Activated B cell treated with CpG ODN at 0.5 μM for 24 hours (primary cell): ENCODE measurements at regions of chr18 and their contacts with region 1.

Region 1: DNA sequence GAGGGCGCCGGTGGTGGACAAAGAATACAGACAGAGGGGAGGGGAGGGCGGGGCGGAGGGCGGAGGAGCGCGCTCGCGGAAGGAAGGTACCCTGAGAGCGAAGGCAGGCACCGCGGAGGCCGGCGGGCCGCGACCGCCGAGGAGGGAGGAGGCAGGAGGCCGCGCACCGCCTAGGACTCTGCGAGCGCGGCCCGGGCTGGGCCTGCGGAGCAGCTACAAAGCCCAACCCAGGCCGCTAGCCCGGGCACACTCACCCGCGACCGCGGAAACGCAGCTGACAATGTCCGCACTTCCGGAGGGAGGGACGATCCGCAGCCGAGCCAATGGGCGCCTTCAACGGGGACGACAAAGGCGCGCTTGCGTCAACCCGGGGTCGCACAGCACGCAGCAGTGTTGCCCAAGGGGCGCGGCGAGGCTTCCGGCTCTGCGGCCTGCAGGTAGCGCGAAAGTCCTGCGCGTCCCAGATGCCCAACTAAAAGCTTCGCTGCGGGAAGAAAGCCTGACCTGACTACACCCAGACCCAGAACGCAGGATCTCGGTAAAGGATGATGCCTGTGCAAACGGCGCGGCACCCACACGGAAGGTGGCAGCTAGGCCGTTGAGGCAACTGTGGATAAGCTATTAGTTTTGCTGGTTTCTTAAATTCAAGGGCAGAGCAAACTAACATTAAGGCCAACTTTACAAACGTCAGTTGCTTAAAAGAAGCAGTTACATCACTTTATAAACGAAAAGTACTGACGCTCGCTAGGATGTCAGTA is at the start of gene C18orf32:
- DNase-seq: peak; percentile 94
- ATAC-seq: peak; percentile 92
- H3K4me3 Mint-ChIP-seq: peak within 1 kb of the TSS; percentile 94
- H3K27ac Mint-ChIP-seq: peak within 1 kb of the TSS; percentile 98
- H3K4me1 Mint-ChIP-seq: peaks cover 68% of the 10 kb centered on the region
- H3K27me3 Mint-ChIP-seq: no peaks in the 10 kb centered on the region
- CTCF ChIP-seq: no peak
- total RNA-seq, gene C18orf32: 31.6 and 32.9 TPM in 2 replicates

Region 2: DNA sequence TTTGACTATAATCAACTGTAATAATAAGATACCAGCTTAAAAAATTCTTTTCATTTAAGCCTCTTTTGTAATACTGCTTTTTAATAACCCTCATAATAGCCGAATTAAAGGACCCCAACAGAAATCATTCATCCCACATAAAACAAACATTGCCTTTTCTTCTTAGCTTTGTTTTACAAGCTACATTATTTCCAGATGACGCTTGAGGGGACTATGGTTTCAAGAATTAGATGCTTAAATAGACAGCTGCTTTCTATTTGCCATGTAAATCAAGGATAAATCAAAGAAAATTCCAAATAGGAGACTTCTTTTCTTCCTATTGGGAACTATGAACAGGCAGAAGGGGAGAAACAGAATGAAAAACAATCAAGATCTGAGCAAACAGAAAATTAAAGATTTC is 335.6 kb before region 1 on chr18:
- CTCF ChIA-PET with region 1: no interaction called
- POLR2A ChIA-PET with region 1: no interaction called
- intact Hi-C with region 1: no loop called
- DNase-seq: no peak
- ATAC-seq: no peak
- H3K4me3 Mint-ChIP-seq: no peak overlapping the region
- H3K27ac Mint-ChIP-seq: no peak overlapping the region
- H3K4me1 Mint-ChIP-seq: no peaks in the 10 kb centered on the region
- H3K27me3 Mint-ChIP-seq: no peaks in the 10 kb centered on the region
- CTCF ChIP-seq: no peak

Region 3: GRCh38 chr18:49476664-49477411 is 10.3 kb before region 1 on chr18:
- CTCF ChIA-PET with region 1: interaction called, 3 read pairs
- POLR2A ChIA-PET with region 1: interaction called, 11 read pairs
- intact Hi-C with region 1: no loop called
- DNase-seq: no peak
- ATAC-seq: peak; percentile 57
- H3K4me3 Mint-ChIP-seq: no peak overlapping the region
- H3K27ac Mint-ChIP-seq: peak overlapping the region; percentile 12
- H3K4me1 Mint-ChIP-seq: peaks cover 10% of the 10 kb centered on the region
- H3K27me3 Mint-ChIP-seq: no peaks in the 10 kb centered on the region
- CTCF ChIP-seq: no peak

Region 4: GRCh38 chr18:49520661-49521145 is 33.6 kb after region 1 on chr18:
- CTCF ChIA-PET with region 1: no interaction called
- POLR2A ChIA-PET with region 1: no interaction called
- intact Hi-C with region 1: no loop called
- DNase-seq: no peak
- ATAC-seq: no peak
- H3K4me3 Mint-ChIP-seq: no peak overlapping the region
- H3K27ac Mint-ChIP-seq: no peak overlapping the region
- H3K4me1 Mint-ChIP-seq: no peaks in the 10 kb centered on the region
- H3K27me3 Mint-ChIP-seq: peaks cover 15% of the 10 kb centered on the region
- CTCF ChIP-seq: no peak

Region 5: DNA sequence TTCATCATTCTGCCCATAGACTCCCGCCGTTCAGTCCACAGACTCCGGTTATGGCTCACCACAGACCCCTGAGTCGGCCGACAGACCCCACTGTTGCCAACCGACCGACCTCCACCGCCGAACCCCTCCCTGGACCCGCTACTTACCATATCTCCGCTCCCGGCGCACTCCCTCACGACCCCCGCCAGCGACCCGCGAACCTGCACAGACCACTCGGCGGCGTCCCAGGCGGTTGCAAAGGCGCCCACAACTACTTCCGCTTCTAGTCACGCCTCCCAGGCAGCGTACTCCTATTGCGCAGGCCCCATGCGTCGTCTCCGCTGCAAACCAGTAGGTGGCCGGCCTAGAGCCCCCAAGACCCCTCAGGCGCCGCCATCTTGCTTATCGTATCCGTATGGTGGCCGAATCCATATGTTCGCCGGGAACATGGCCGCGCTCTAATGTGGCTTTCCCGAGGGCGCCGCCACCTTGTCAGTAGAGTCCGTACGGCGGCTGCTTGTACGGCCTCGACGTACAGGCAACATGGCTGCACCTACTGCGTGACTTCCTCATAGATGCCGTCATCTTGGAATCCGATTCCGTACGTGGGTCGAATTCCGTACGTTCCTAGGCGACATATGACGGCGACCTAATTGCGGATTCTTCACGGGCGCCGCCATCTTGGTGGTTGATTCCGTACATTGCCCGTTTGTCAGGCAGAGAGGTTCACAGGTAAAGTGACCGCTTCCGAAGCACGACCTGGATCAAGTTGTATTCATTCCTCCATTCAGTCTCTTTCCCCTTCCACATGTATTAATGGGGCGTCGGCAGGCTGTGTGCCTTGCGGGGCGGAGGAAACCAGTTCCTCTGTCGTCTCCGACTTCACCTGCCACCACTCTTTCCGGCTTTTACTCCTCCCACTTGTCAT is 800.6 kb after region 1 on chr18 and contains the start of gene CXXC1:
- CTCF ChIA-PET with region 1: no interaction called
- POLR2A ChIA-PET with region 1: no interaction called
- intact Hi-C with region 1: loop called (anchors 1 kb)
- DNase-seq: peak; percentile 88
- ATAC-seq: peak; percentile 87
- H3K4me3 Mint-ChIP-seq: peak within 1 kb of the TSS; percentile 99
- H3K27ac Mint-ChIP-seq: peak within 1 kb of the TSS; percentile 95
- H3K4me1 Mint-ChIP-seq: peaks cover 23% of the 10 kb centered on the region
- H3K27me3 Mint-ChIP-seq: no peaks in the 10 kb centered on the region
- CTCF ChIP-seq: no peak
- total RNA-seq, gene CXXC1: 126 and 134 TPM in 2 replicates

Region 6: DNA sequence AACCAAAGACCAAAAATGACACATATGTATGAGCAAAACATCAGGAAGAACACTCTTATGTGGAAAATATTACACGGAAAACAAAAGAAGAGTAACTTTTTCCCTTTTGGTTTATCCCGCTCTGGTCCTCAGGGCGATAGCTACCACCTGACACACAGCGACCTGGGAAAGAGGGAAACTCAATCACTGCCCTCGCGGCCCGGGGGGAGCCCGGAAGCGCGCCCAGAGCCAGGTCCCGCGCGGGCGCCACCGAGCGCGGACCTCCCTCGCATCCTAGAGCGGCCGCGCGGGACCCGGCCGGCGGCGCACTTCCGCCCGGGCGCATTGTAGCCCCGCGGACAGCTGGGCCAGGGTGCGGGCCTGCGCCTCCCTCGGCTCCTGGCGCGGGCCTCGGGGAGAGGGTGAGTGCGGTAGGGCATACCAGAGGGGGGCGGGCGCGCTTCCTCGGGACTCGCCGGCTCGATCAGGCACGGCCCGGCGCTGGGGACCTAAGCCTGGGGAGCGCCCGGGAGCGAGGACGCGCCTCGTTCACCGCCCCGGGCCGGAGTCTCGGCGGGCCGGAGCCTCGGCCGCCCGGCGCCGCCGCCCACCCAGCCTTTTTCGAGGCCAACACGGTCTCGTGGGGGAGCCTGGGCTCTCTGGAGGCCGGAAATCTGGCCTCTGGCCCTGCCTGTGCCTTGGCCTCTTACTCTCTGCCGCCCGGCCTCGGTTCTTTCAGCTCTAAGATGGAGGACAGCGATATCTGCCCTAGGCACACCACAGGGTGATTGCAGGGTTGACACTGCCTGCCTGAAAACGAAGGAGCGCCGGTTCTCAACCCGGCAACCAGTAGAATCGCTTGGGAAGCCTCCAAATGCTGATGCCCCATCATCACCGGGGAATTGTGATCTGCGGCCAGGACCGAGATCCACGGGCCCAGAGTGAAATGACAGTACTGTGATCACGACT is 1480.9 kb after region 1 on chr18 and contains the start of gene ELAC1:
- CTCF ChIA-PET with region 1: no interaction called
- POLR2A ChIA-PET with region 1: no interaction called
- intact Hi-C with region 1: loop called (anchors 1 kb)
- DNase-seq: peak; percentile 75
- ATAC-seq: peak; percentile 95
- H3K4me3 Mint-ChIP-seq: peak within 1 kb of the TSS; percentile 92
- H3K27ac Mint-ChIP-seq: peak within 1 kb of the TSS; percentile 89
- H3K4me1 Mint-ChIP-seq: peaks cover 11% of the 10 kb centered on the region
- H3K27me3 Mint-ChIP-seq: no peaks in the 10 kb centered on the region
- CTCF ChIP-seq: no peak
- total RNA-seq, gene ELAC1: 9.7 and 14.0 TPM in 2 replicates